ENCODE measurements at regions of chr14 and their contacts with region 1.

Region 1: GRCh38 chr14:102096214-102097114 is 9.6 kb upstream of the HSP90AA1 start:
- DNase-seq: peak; percentile 46
- ATAC-seq: peak; percentile 56
- H3K4me3 Mint-ChIP-seq: no peak overlapping the region
- H3K27ac Mint-ChIP-seq: no peak overlapping the region
- H3K4me1 Mint-ChIP-seq: peaks cover 4% of the 10 kb centered on the region
- H3K27me3 Mint-ChIP-seq: no peaks in the 10 kb centered on the region
- CTCF ChIP-seq: no peak

Region 2: GRCh38 chr14:101980251-101981099 is 116.0 kb before region 1 on chr14:
- CTCF ChIA-PET with region 1: no interaction called
- POLR2A ChIA-PET with region 1: no interaction called
- intact Hi-C with region 1: no loop called
- DNase-seq: no peak
- ATAC-seq: peak; percentile 60
- H3K4me3 Mint-ChIP-seq: no peak overlapping the region
- H3K27ac Mint-ChIP-seq: peak overlapping the region; percentile 80
- H3K4me1 Mint-ChIP-seq: peaks cover 8% of the 10 kb centered on the region
- H3K27me3 Mint-ChIP-seq: no peaks in the 10 kb centered on the region
- CTCF ChIP-seq: no peak

Region 3: GRCh38 chr14:102046343-102047278 is 49.9 kb before region 1 on chr14:
- CTCF ChIA-PET with region 1: no interaction called
- POLR2A ChIA-PET with region 1: no interaction called
- intact Hi-C with region 1: loop called (anchors 1 kb)
- DNase-seq: no peak
- ATAC-seq: peak; percentile 50
- H3K4me3 Mint-ChIP-seq: no peak overlapping the region
- H3K27ac Mint-ChIP-seq: no peak overlapping the region
- H3K4me1 Mint-ChIP-seq: no peaks in the 10 kb centered on the region
- H3K27me3 Mint-ChIP-seq: no peaks in the 10 kb centered on the region
- CTCF ChIP-seq: no peak

Region 4: DNA sequence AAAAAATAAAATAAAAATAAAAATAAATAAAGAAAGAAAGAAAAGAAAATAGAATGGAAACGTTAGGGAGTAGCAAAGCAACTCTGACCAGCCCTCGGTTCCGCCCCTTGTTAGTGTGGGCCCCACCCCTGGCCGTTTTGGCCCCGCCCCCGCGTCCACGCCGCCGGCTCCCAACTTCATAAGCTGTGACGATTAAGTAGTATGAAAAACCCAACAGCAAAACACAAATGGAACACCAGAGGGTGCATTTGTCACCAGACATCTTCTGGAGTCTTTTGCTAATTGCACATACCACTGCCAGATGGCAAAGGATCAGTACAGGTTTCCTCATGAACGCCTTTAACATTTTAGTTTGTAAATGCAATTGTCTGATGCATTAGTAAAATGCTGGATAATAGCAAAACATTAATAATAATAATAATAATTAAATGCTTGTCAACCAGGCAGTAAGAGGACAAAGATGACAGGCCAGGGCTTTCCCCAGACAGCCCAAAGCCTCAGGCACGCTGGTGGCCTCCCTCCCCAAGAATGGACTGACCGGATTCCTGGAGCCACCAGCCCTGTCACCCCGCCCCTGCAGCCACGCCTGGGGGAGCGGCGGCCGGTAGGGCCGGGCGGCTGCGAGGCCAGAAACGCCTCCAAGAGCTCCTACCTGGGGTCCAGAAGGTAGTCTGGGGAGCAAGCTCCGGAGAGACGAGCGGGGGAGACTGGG is 33.2 kb before region 1 on chr14:
- CTCF ChIA-PET with region 1: interaction called, 18 read pairs
- POLR2A ChIA-PET with region 1: no interaction called
- intact Hi-C with region 1: loop called (anchors 1 kb)
- DNase-seq: peak; percentile 46
- ATAC-seq: peak; percentile 97
- H3K4me3 Mint-ChIP-seq: no peak overlapping the region
- H3K27ac Mint-ChIP-seq: no peak overlapping the region
- H3K4me1 Mint-ChIP-seq: peaks cover 5% of the 10 kb centered on the region
- H3K27me3 Mint-ChIP-seq: no peaks in the 10 kb centered on the region
- CTCF ChIP-seq: no peak

Region 5: DNA sequence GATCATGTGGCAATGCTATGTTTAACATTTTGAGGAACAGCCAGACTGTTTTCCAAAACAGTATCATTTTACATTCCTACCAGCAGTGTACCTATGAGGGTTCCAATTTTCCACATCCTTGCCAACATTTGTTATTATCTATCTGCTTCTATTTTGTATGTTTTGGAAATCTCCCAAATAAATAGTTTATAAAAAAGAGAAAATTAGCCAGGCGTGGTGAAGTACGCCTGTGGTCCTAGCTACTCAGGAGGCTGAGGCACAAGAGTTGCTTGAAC is 21.8 kb before region 1 on chr14:
- CTCF ChIA-PET with region 1: interaction called, 5 read pairs
- POLR2A ChIA-PET with region 1: interaction called, 13 read pairs
- intact Hi-C with region 1: no loop called
- DNase-seq: no peak
- ATAC-seq: no peak
- H3K4me3 Mint-ChIP-seq: no peak overlapping the region
- H3K27ac Mint-ChIP-seq: no peak overlapping the region
- H3K4me1 Mint-ChIP-seq: no peaks in the 10 kb centered on the region
- H3K27me3 Mint-ChIP-seq: no peaks in the 10 kb centered on the region
- CTCF ChIP-seq: no peak

Region 6: GRCh38 chr14:102235275-102235897 is 138.9 kb after region 1 on chr14:
- CTCF ChIA-PET with region 1: no interaction called
- POLR2A ChIA-PET with region 1: no interaction called
- intact Hi-C with region 1: no loop called
- DNase-seq: peak; percentile 52
- ATAC-seq: peak; percentile 99
- H3K4me3 Mint-ChIP-seq: no peak overlapping the region
- H3K27ac Mint-ChIP-seq: no peak overlapping the region
- H3K4me1 Mint-ChIP-seq: no peaks in the 10 kb centered on the region
- H3K27me3 Mint-ChIP-seq: no peaks in the 10 kb centered on the region
- CTCF ChIP-seq: peak; percentile 37

Measured in activated B cell treated with CpG ODN at 0.5 μM for 24 hours (primary cell).